ENCODE measurements at regions of chr14 and their contacts with region 1.

Region 1: GRCh38 chr14:32076278-32077080 is 625 bp upstream of the ARHGAP5 start:
- DNase-seq: peak; percentile 82
- ATAC-seq: peak; percentile 68
- H3K4me3 Mint-ChIP-seq: peak overlapping the region; percentile 93
- H3K27ac Mint-ChIP-seq: peak overlapping the region; percentile 98
- H3K4me1 Mint-ChIP-seq: peaks cover 33% of the 10 kb centered on the region
- H3K27me3 Mint-ChIP-seq: no peaks in the 10 kb centered on the region
- CTCF ChIP-seq: no peak

Region 2: DNA sequence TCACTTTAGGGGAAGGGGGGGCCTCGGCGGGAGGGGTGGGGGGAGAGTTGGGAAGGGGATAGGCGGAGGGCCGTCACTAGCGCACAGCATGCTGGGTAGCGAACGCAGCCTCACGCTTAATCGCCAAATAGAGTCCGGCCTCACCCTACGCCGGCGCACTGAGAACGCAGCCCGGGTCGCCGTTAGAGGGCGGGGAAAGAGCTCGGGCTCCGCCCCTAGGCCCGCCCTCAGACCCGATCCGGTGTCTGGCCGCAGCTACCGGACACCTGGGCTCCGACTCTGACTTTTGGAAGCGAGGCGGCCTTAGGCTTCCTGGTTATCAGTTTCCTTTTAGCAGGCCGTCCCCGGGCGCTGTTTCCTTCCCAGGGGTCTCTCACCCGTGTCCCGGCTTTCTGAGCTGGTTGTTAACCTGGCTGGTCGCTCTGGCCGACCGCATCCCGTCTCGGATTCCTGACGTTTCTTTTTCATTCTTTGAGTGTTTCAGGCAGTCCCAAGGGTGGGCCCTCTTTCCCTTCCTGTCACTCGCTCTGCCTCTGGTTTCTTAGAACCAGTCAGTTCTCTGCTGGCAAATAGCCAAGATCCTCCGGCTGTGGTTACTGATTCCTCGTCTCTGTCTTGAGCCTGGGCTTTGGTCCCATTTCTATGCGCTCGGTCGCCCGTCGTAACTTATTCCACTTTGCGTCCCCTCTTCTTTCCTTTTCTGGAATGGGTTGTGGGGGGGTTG is 1049.9 kb before region 1 on chr14:
- CTCF ChIA-PET with region 1: no interaction called
- POLR2A ChIA-PET with region 1: no interaction called
- intact Hi-C with region 1: loop called (anchors 5 kb)
- DNase-seq: peak; percentile 95
- ATAC-seq: peak; percentile 94
- H3K4me3 Mint-ChIP-seq: peak overlapping the region; percentile 99
- H3K27ac Mint-ChIP-seq: peak overlapping the region; percentile 95
- H3K4me1 Mint-ChIP-seq: peaks cover 40% of the 10 kb centered on the region
- H3K27me3 Mint-ChIP-seq: no peaks in the 10 kb centered on the region
- CTCF ChIP-seq: no peak

Region 3: GRCh38 chr14:31456841-31457664 is 619.4 kb before region 1 on chr14 and contains the start of gene DTD2:
- CTCF ChIA-PET with region 1: interaction called, 3 read pairs
- POLR2A ChIA-PET with region 1: interaction called, 5 read pairs
- intact Hi-C with region 1: loop called (anchors 2 kb)
- DNase-seq: peak; percentile 82
- ATAC-seq: peak; percentile 98
- H3K4me3 Mint-ChIP-seq: peak within 1 kb of the TSS; percentile 99
- H3K27ac Mint-ChIP-seq: peak within 1 kb of the TSS; percentile 96
- H3K4me1 Mint-ChIP-seq: peaks cover 31% of the 10 kb centered on the region
- H3K27me3 Mint-ChIP-seq: no peaks in the 10 kb centered on the region
- CTCF ChIP-seq: no peak
- total RNA-seq, gene DTD2: 19.8 and 21.3 TPM in 2 replicates

Region 4: GRCh38 chr14:32047791-32048190 is 28.7 kb before region 1 on chr14:
- CTCF ChIA-PET with region 1: interaction called, 7 read pairs
- POLR2A ChIA-PET with region 1: interaction called, 13 read pairs
- intact Hi-C with region 1: loop called (anchors 1 kb)
- DNase-seq: no peak
- ATAC-seq: no peak
- H3K4me3 Mint-ChIP-seq: no peak overlapping the region
- H3K27ac Mint-ChIP-seq: no peak overlapping the region
- H3K4me1 Mint-ChIP-seq: peaks cover 36% of the 10 kb centered on the region
- H3K27me3 Mint-ChIP-seq: peaks cover 5% of the 10 kb centered on the region
- CTCF ChIP-seq: no peak

Region 5: DNA sequence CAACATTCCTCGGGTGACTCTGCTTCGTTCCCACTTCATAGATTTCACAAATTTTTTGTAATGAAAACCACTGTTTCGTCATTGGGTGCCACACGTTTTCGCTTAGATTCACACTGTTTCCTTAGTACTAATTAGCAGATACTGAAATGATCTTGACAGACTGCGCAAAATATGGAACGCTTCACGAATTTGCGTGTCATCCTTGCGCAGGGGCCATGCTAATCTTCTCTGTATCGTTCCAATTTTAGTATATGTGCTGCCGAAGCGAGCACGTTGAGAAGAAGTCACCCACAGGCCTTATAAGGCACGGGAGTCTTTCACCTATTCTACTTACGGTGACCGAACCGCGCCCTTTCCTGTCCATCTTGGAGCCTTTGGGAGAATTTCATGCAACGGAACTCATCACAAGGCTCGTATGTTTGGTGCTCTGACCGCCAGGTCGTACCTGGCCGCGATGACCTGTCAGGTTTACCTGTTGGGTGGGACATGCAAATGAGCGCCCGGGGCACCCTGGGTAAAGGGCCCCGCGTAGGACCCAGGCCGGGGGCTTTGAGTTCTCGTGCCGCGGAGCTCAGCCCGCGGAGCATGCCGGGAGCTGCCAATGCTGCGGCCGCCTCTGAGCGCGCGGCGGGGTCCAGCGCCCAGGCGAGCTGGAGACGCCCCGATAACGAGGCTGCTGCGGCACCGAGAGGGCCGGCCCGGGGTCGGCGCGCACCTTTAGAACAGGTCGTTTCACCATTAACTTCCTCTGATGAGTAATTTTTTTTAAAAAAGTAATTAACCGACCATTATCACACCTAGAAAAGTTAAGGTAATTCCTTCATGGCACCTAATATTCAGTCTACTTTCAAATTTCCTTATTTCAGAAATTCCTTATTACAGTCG is 126.8 kb after region 1 on chr14 and contains the start of gene RNU6-8:
- CTCF ChIA-PET with region 1: interaction called, 4 read pairs
- POLR2A ChIA-PET with region 1: interaction called, 53 read pairs
- intact Hi-C with region 1: loop called (anchors 1 kb)
- DNase-seq: peak; percentile 84
- ATAC-seq: peak; percentile 78
- H3K4me3 Mint-ChIP-seq: peak within 1 kb of the TSS; percentile 87
- H3K27ac Mint-ChIP-seq: peak within 1 kb of the TSS; percentile 100
- H3K4me1 Mint-ChIP-seq: peaks cover 51% of the 10 kb centered on the region
- H3K27me3 Mint-ChIP-seq: no peaks in the 10 kb centered on the region
- CTCF ChIP-seq: no peak
- total RNA-seq, gene RNU6-8: not detected in 2 replicates

Measured in activated B cell treated with CpG ODN at 0.5 μM for 24 hours (primary cell).